ENCODE measurements at regions of chr2 and their contacts with region 1.

Region 1: GRCh38 chr2:54206596-54206995 is 49.4 kb downstream of the TSPYL6 start:
- DNase-seq: no peak
- H3K4me3 ChIP-seq: no peak overlapping the region
- H3K27ac ChIP-seq: no peak overlapping the region
- H3K4me1 ChIP-seq: peaks cover 0 to 26% (median 10%) of the 10 kb centered on the region in 6 donors
- H3K27me3 ChIP-seq: no peaks in the 10 kb centered on the region
- CTCF ChIP-seq: peak in 9 of 11 experiments; percentile 21 to 49 (median 39)
- POLR2A ChIP-seq: no peak

Region 2: GRCh38 chr2:53786705-53787612 is 419.6 kb before region 1 on chr2 and contains the starts of genes ASB3 and ERLEC1:
- intact Hi-C with region 1: no loop called
- DNase-seq: peak; percentile 98
- H3K4me3 ChIP-seq: peak within 1 kb of the TSS; percentile 56 to 94 (median 80)
- H3K27ac ChIP-seq: peak within 1 kb of the TSS; percentile 76 to 92 (median 85)
- H3K4me1 ChIP-seq: peaks cover 31 to 87% (median 48%) of the 10 kb centered on the region in 6 donors
- H3K27me3 ChIP-seq: no peaks in the 10 kb centered on the region
- CTCF ChIP-seq: peak in 1 of 11 experiments; percentile 18
- POLR2A ChIP-seq: no peak
- total RNA-seq, gene ASB3: 19.2 to 28.1 (median 21.9) TPM
- total RNA-seq, gene ERLEC1: 23.9 to 56.4 (median 36.2) TPM

Region 3: DNA sequence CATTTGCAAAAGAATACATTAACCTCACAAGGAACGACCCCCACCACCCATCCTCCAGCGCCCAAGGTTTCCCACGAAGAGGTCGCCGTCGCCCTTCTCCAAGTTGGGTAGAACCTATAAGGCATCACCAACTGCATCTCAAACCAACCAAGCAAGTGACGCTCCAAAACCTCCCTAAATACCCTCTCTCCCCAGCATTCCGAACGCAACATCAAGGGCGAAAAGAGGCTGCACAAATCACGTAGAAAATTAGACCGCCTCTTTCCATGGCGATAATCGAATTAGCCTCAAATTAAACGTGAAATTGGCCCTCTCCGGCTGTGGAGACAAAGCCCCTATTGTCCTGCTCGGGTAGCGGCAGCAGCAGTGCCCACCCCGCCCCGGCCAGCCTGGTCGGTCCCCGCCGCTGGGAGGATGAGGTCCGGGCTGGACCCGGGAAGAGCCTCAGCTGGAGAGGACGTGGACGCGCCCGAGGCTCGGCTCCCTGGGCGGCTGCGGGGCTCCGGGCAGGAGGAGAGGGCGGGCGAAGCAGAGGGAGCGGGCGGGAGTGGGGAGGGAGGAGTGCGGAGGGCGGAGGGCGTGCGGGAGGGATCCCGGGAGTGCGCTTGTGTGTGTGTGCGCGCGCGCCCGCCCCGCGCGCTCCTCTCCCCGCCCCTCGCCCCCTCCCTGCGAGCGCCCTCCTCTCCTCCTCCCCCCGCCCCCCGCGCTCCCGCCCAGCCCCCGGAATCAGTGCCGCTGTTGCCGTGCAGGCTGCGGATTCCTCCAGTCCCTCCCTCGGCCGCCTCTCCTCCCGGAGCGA is 249.2 kb after region 1 on chr2 and contains the start of gene SPTBN1:
- intact Hi-C with region 1: loop called (anchors 10 kb)
- DNase-seq: peak; percentile 89
- H3K4me3 ChIP-seq: peak within 1 kb of the TSS; percentile 57 to 90 (median 74)
- H3K27ac ChIP-seq: peak within 1 kb of the TSS; percentile 75 to 95 (median 90)
- H3K4me1 ChIP-seq: peaks cover 10 to 57% (median 39%) of the 10 kb centered on the region in 6 donors
- H3K27me3 ChIP-seq: peaks cover 0 to 60% (median 33%) of the 10 kb centered on the region in 7 donors
- CTCF ChIP-seq: peak in 2 of 11 experiments; percentile 5 to 7
- POLR2A ChIP-seq: peak in 2 of 3 donors; percentile 56 to 78
- total RNA-seq, gene SPTBN1: 223 to 352 (median 318) TPM